Right ventricle myocardium inferior (tissue), 1 donor: ENCODE measurements at regions of chr2 and their contacts with region 1.

Region 1: GRCh38 chr2:30629866-30630265 is 177.4 kb downstream of the CAPN13 start:
- DNase-seq: no peak
- ATAC-seq: no peak

Region 2: DNA sequence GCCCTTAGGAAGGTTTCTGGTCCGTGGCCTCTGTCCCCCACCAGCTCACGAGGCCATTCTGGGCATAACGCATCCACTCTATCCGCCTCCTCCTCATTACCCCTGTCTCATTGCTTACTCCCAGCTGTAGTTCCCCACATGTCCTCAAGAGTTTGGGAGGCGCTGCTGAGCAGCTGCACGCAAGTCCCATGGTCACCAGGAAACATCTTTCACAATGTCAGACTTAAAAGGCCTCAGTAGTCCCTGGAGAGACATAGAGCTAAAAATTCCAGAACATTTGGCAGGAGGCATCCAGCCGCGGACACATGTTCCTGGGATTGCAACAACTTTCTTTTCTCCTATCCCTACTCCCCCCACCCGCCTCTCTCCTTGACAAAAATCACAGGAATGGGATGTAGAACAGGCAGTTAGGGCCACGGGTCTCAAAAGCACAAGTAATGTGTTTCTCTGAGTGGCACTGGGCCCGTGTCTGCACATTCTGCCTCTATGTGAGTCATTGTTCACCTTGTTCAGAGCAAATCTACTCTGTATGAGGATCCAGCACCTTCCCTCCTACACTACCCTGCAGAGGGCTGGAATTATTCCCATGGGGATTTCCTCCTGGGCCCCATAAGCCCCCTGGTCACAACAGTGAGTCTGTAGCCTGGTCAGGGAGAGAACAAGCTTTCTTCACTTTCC is 390.4 kb before region 1 on chr2:
- intact Hi-C with region 1: no loop called
- DNase-seq: peak; percentile 81
- ATAC-seq: peak; percentile 85

Region 3: GRCh38 chr2:30511122-30512083 is 118.5 kb before region 1 on chr2:
- intact Hi-C with region 1: loop called (anchors 10 kb)
- DNase-seq: no peak
- ATAC-seq: peak; percentile 74